HCT116 (cell line): ENCODE measurements at regions of chr11 and their contacts with region 1.

Region 1: GRCh38 chr11:67082035-67082791 is 25.6 kb downstream of the RHOD start:
- DNase-seq: no peak
- ATAC-seq: peak; percentile 16
- H3K4me3 ChIP-seq: peak overlapping the region in 1 of 2 experiments; percentile 24; a peak in 2 of 4 replicates
- H3K27ac ChIP-seq: no peak overlapping the region
- H3K4me1 ChIP-seq: peaks cover 25 to 40% of the 10 kb centered on the region in 2 experiments
- H3K27me3 ChIP-seq: no peaks in the 10 kb centered on the region
- CTCF ChIP-seq: peak in 1 of 3 experiments; percentile 20; a peak in 1 of 6 replicates
- POLR2A ChIP-seq: no peak
- RAD21 ChIP-seq: peak; percentile 20; the same call in 1 of the 2 replicates

Region 2: DNA sequence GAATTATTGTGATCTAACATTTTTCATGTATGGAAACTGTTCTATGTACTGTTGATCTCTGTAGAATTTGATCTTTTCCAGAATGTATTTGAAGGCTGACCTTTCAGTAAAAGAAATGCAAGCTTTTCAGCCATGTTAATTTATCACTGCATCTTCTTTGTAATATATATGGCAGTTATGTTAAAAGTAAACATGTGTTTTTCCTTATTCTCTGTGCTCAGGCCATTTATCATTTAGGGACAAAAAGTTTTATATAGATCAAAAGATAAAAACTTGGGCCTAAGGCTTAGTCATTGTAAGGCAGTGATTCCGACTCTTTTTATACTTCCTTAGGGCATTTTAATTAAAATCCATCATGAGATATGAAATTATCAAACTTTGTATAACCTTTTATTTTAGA is 85.5 kb after region 1 on chr11:
- CTCF ChIA-PET with region 1: interaction called, 5 read pairs
- POLR2A ChIA-PET with region 1: no interaction called
- RAD21 ChIA-PET with region 1: no interaction called
- intact Hi-C with region 1: loop called (anchors 1 kb)
- DNase-seq: no peak
- ATAC-seq: no peak
- H3K4me3 ChIP-seq: no peak overlapping the region
- H3K27ac ChIP-seq: no peak overlapping the region
- H3K4me1 ChIP-seq: peaks cover 8 to 22% of the 10 kb centered on the region in 2 experiments
- H3K27me3 ChIP-seq: no peaks in the 10 kb centered on the region
- CTCF ChIP-seq: no peak
- POLR2A ChIP-seq: no peak
- RAD21 ChIP-seq: no peak